ENCODE measurements at regions of chr5 and their contacts with region 1.

Region 1: GRCh38 chr5:157603333-157604190 is 28.0 kb upstream of the ADAM19 start:
- DNase-seq: peak; percentile 78
- ATAC-seq: peak; percentile 44
- H3K4me3 Mint-ChIP-seq: peak overlapping the region; percentile 49
- H3K27ac Mint-ChIP-seq: peak overlapping the region; percentile 79
- H3K4me1 Mint-ChIP-seq: peaks cover 88% of the 10 kb centered on the region
- H3K27me3 Mint-ChIP-seq: no peaks in the 10 kb centered on the region

Region 2: GRCh38 chr5:157172403-157172802 is 431.2 kb before region 1 on chr5:
- CTCF ChIA-PET with region 1: no interaction called
- POLR2A ChIA-PET with region 1: no interaction called
- intact Hi-C with region 1: loop called in 1 of 2 experiments (anchors 5 kb)
- DNase-seq: peak; percentile 96
- ATAC-seq: peak; percentile 93
- H3K4me3 Mint-ChIP-seq: peak overlapping the region; percentile 63
- H3K27ac Mint-ChIP-seq: peak overlapping the region; percentile 94
- H3K4me1 Mint-ChIP-seq: peaks cover 85% of the 10 kb centered on the region
- H3K27me3 Mint-ChIP-seq: no peaks in the 10 kb centered on the region

Region 3: DNA sequence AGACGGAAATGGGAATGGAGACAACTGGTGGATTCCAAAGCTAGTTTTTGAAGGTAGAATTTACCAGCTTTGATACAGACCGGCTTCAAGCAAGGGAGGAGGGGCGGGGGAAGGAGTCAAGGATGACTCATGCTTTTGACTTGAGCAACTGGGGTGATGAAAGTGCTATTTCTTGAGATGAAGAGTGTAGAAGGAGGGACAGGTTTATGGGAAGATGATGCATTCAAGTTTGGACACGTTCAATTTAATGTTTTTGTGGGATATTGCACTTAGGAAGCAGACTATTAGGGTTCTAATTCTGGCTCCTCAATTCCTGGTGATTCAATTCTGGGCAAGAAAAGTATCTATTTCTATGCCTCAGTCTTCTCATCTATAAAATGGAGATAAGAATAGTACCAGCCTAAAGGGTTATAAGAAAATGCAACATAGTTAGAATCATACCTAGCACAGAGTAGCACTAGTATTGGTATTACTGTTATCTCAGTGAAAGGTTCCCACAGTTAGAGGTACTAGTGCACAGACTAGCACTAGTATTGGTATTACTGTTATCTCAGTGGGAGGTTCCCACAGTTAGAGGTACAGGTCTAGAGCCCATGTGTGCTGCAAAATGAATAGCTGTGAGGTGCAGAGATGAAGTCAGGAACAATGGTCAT is 138.9 kb before region 1 on chr5:
- CTCF ChIA-PET with region 1: no interaction called
- POLR2A ChIA-PET with region 1: no interaction called
- intact Hi-C with region 1: loop called (anchors 2 kb)
- DNase-seq: peak; percentile 87
- ATAC-seq: peak; percentile 92
- H3K4me3 Mint-ChIP-seq: peak overlapping the region; percentile 34
- H3K27ac Mint-ChIP-seq: peak overlapping the region; percentile 84
- H3K4me1 Mint-ChIP-seq: peaks cover 36% of the 10 kb centered on the region
- H3K27me3 Mint-ChIP-seq: peaks cover 18% of the 10 kb centered on the region

Region 4: DNA sequence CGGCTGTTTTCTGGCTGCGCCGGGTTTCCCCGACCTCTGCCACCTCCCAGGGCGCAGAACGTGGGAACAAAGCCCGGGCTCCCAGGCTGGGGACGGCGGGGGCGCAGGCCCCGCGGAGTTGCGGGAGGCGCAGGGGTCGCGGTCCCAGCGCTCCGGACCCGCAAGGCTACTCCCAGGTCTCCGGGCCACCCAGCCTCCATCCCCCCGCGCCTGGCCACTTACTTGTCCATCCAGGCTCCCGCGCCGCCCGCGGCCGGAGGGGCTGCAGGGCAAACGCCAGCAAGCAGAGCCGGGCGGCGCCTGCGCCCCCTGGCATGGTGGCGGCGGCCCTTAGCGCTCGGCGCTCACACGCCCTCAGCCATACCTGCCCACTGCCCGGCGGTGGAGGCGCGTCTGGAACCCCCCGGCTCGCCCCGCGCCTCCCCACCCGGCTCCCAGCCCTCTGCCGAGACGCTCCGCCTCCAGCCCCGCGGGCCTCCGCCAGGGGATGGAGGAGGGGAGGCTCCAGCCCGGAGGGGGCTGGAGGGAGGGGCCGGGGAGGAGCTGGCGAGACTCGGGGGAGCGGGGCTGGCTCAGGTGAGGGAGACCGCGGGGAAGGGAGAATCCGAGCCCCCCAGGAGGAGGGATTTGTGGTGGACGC is 28.1 kb before region 1 on chr5 and contains the start of gene ADAM19:
- CTCF ChIA-PET with region 1: no interaction called
- POLR2A ChIA-PET with region 1: no interaction called
- intact Hi-C with region 1: loop called in 1 of 2 experiments (anchors 5 kb)
- DNase-seq: peak; percentile 70
- ATAC-seq: peak; percentile 75
- H3K4me3 Mint-ChIP-seq: peak within 1 kb of the TSS; percentile 85
- H3K27ac Mint-ChIP-seq: peak within 1 kb of the TSS; percentile 83
- H3K4me1 Mint-ChIP-seq: peaks cover 46% of the 10 kb centered on the region
- H3K27me3 Mint-ChIP-seq: peaks cover 4% of the 10 kb centered on the region
- total RNA-seq, gene ADAM19: 63.6 to 69.5 TPM

Region 5: GRCh38 chr5:157670662-157671591 is 67.4 kb after region 1 on chr5 and contains the start of gene C5orf52:
- CTCF ChIA-PET with region 1: no interaction called
- POLR2A ChIA-PET with region 1: no interaction called
- intact Hi-C with region 1: loop called in 1 of 2 experiments (anchors 5 kb)
- DNase-seq: peak; percentile 47
- ATAC-seq: peak; percentile 43
- H3K4me3 Mint-ChIP-seq: peak within 1 kb of the TSS; percentile 81
- H3K27ac Mint-ChIP-seq: peak within 1 kb of the TSS; percentile 83
- H3K4me1 Mint-ChIP-seq: peaks cover 23% of the 10 kb centered on the region
- H3K27me3 Mint-ChIP-seq: peaks cover 16% of the 10 kb centered on the region
- total RNA-seq, gene C5orf52: not detected

Region 6: GRCh38 chr5:157858527-157859226 is 255.1 kb after region 1 on chr5 and contains the start of gene CLINT1:
- CTCF ChIA-PET with region 1: no interaction called
- POLR2A ChIA-PET with region 1: interaction called, 3 read pairs
- intact Hi-C with region 1: loop called in 1 of 2 experiments (anchors 2 kb)
- DNase-seq: peak; percentile 94
- ATAC-seq: peak; percentile 81
- H3K4me3 Mint-ChIP-seq: peak within 1 kb of the TSS; percentile 91
- H3K27ac Mint-ChIP-seq: peak within 1 kb of the TSS; percentile 96
- H3K4me1 Mint-ChIP-seq: peaks cover 76% of the 10 kb centered on the region
- H3K27me3 Mint-ChIP-seq: no peaks in the 10 kb centered on the region
- total RNA-seq, gene CLINT1: 59.0 to 69.0 TPM

Measured in activated CD4-positive, alpha-beta T cell treated with anti-CD3 and anti-CD28 coated beads for 36 hours (primary cell).